Left cardiac atrium (tissue), 4 donors: ENCODE measurements at regions of chr1 and their contacts with region 1.

Region 1: GRCh38 chr1:77832901-77833300 is 53.5 kb downstream of the MIGA1 start:
- DNase-seq: no peak
- ATAC-seq: peak; percentile 87 to 92

Region 2: DNA sequence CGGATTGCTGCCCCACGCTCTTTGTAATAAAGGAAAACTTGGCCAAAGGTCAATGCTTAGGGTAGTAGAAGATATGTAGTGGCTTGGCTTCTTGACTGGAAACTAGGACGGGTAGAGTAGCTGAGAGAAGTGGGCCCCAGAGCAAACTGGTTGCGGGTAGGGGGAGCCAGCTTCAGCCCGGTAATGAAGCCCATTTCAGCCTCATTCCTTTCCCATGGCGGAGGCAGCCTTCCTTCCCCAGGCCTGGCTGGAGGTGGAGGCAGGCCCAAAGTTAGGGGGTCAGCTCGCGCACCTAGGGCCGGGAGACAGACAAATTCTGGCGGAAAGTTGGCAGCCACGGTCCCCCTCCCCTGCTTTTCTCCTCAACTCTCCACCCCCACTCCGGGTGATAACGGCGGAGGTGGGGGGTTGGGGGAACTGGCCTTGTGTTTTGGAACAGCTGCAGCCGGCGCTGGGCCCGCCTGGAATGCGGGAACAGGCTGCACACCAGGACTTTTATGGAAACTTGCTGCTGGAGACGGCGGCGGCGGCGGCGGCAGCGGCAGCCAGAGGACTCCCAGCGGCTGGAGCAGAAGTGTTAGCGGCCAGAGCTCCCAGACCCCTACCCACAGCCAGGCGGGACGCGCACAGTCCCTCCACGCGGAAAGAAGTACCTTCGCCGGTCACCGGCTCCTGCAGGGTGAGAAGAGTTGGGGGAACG is 55.3 kb after region 1 on chr1 and contains the start of gene NEXN:
- intact Hi-C with region 1: loop called (anchors 2 to 10 kb)
- DNase-seq: peak; percentile 88
- ATAC-seq: peak; percentile 90 to 91
- total RNA-seq, gene NEXN: 218 to 235 TPM

Region 3: DNA sequence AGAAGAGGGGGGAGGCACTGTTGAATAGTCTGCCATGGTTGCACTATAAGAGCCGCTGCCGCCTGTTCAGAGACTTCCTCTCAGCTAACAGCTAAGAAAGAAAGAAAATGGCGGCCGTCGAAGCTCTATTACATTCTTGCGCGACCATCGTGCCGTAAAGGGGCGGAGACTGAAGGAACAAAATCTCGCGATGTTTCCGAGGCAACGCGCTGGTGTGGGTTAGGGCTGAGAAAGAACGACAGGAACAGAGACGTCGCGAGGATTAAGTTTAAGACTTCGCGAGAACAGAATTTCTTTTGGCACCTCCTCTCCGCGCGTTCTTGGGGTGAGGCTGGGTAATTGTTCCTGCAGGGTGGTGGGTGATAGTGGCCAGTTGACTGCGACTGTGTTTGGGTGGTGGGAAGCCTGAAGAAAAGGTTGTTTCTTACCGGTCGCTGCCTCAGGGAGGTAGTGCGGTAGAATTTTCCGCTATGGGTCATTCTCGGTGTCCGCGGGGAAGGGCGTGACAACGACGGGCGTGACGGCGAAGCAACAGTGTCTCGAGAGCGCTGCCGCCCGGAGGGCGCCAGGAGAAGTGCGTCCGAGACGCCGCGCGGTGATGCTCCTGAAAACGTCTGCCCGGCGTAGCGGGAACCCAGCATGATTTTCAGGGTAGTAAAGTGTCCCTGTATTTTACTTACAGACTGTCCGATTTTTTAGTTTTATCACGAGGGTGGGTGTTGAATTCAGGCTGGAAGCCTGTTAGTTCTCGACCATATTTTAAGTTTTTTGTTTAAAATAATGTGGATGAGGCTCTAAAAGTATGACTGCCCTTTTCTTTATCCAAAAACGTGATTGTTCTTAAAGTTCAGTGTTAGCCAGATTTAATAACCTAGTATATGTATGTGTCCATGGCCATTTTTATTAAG is 146.3 kb after region 1 on chr1 and contains the start of gene FUBP1:
- intact Hi-C with region 1: no loop called
- DNase-seq: peak; percentile 95
- ATAC-seq: peak; percentile 94
- total RNA-seq, gene FUBP1: 54.3 to 78.5 TPM

Region 4: GRCh38 chr1:78114034-78114956 is 281.4 kb after region 1 on chr1:
- intact Hi-C with region 1: no loop called
- DNase-seq: peak; percentile 33
- ATAC-seq: peak; percentile 79 to 82